ENCODE measurements at regions of chr7 and their contacts with region 1.

Region 1: DNA sequence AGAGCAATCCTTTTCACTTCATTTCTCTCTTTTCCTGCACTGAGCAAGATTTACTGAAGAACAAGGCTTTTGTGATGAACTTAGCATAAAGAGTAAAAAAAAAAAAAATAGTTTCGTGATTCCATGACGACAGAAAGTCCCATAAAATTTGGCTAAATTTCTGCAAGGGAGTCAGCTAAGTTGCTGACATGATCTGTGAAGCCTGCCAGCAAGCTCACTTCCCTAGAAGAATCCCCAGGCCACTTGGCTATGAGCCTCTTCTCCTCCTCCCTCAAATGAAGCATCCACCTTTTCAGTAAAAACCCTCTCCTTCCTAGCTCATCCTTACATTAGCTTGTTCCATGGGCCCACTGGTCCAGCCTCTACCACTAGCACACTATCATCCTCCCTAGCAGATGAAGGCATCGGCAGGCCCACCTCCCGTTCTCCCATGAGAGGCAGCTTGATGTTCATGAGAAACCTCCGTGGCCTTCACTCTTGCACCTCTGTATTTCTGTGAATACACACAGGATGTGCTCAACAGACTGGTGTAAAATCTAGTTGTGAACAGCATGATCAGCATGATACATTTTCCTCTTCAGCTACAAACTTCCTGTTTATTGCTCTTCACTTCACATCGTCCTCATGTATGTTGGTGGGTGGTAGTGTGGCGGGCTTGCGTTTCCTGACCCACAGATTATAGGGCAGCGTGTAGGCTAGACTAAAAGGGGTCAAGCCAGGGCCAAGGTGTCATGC is 30.9 kb downstream of the GIMAP8 start:
- DNase-seq: peak; percentile 60
- H3K4me3 Mint-ChIP-seq: peak overlapping the region; percentile 88
- H3K27ac Mint-ChIP-seq: peak overlapping the region; percentile 100
- H3K4me1 Mint-ChIP-seq: peaks cover 96% of the 10 kb centered on the region
- H3K27me3 Mint-ChIP-seq: no peaks in the 10 kb centered on the region

Region 2: GRCh38 chr7:150502519-150502918 is 21.2 kb after region 1 on chr7:
- intact Hi-C with region 1: loop called (anchors 1 kb)
- DNase-seq: no peak
- H3K4me3 Mint-ChIP-seq: peak overlapping the region; percentile 60
- H3K27ac Mint-ChIP-seq: peak overlapping the region; percentile 96
- H3K4me1 Mint-ChIP-seq: peaks cover 85% of the 10 kb centered on the region
- H3K27me3 Mint-ChIP-seq: no peaks in the 10 kb centered on the region

Region 3: GRCh38 chr7:150514748-150515222 is 33.4 kb after region 1 on chr7 and contains the start of gene GIMAP7:
- intact Hi-C with region 1: loop called (anchors 1 kb)
- DNase-seq: peak; percentile 68
- H3K4me3 Mint-ChIP-seq: peak within 1 kb of the TSS; percentile 96
- H3K27ac Mint-ChIP-seq: peak within 1 kb of the TSS; percentile 98
- H3K4me1 Mint-ChIP-seq: peaks cover 65% of the 10 kb centered on the region
- H3K27me3 Mint-ChIP-seq: no peaks in the 10 kb centered on the region
- total RNA-seq, gene GIMAP7: 46.9 and 55.1 TPM in 2 replicates